Caco-2 (cell line): ENCODE measurements at regions of chr22 and their contacts with region 1.

Region 1: GRCh38 chr22:43385770-43386641 is 25.8 kb upstream of the MPPED1 start:
- DNase-seq: peak; percentile 67 to 79
- H3K4me3 ChIP-seq: no peak overlapping the region
- H3K4me3 Mint-ChIP-seq: no peak overlapping the region
- H3K27ac Mint-ChIP-seq: no peak overlapping the region
- H3K4me1 ChIP-seq: 0 out of 2 replicates have a peak, but pooled peaks cover 4% of the 10 kb centered on the region
- H3K4me1 Mint-ChIP-seq: no peaks in the 10 kb centered on the region
- H3K27me3 ChIP-seq: no peaks in the 10 kb centered on the region
- H3K27me3 Mint-ChIP-seq: peaks cover 22% of the 10 kb centered on the region
- CTCF ChIP-seq: peak; percentile 92 to 94

Region 2: GRCh38 chr22:43203471-43203981 is 182.5 kb before region 1 on chr22:
- CTCF ChIA-PET with region 1: no interaction called
- POLR2A ChIA-PET with region 1: no interaction called
- intact Hi-C with region 1: no loop called
- DNase-seq: no peak
- H3K4me3 ChIP-seq: no peak overlapping the region
- H3K4me3 Mint-ChIP-seq: no peak overlapping the region
- H3K27ac Mint-ChIP-seq: no peak overlapping the region
- H3K4me1 ChIP-seq: no peaks in the 10 kb centered on the region
- H3K4me1 Mint-ChIP-seq: no peaks in the 10 kb centered on the region
- H3K27me3 ChIP-seq: no peaks in the 10 kb centered on the region
- H3K27me3 Mint-ChIP-seq: no peaks in the 10 kb centered on the region
- CTCF ChIP-seq: no peak

Region 3: DNA sequence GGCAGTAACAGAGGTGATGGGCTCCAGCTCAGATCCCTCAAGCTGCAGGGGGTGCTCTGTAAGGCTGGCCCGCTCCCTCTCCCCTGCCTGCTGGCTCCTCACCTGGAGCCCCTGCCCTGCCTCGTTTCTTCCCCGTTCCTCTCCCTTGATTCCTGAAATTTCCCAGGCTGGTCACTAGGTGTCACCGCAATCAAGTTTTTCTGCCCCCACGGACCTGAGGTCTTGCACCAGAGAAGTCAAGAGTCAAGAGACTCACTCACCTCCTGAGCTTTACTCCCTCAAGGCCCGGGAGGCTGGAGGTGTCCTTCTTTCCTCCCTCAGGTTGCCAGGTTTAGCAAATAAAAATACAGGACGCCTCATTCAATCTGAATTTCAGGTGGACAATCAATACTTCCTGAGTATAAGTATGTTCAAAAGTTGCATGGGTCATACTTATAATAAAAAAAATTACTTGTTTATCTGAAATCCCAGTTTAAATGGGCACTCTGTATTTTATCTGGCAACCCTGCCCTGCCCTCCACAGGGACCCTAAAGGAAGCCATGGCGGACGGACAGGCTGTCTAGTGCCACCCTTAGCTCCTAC is 112.0 kb before region 1 on chr22:
- CTCF ChIA-PET with region 1: interaction called, 24 read pairs
- POLR2A ChIA-PET with region 1: no interaction called
- intact Hi-C with region 1: loop called (anchors 1 kb)
- DNase-seq: peak; percentile 67 to 77
- H3K4me3 ChIP-seq: no peak overlapping the region
- H3K4me3 Mint-ChIP-seq: no peak overlapping the region
- H3K27ac Mint-ChIP-seq: no peak overlapping the region
- H3K4me1 ChIP-seq: no peaks in the 10 kb centered on the region
- H3K4me1 Mint-ChIP-seq: no peaks in the 10 kb centered on the region
- H3K27me3 ChIP-seq: no peaks in the 10 kb centered on the region; the same call in 1 of the 2 replicates
- H3K27me3 Mint-ChIP-seq: peaks cover 4% of the 10 kb centered on the region
- CTCF ChIP-seq: peak; percentile 77 to 78

Region 4: DNA sequence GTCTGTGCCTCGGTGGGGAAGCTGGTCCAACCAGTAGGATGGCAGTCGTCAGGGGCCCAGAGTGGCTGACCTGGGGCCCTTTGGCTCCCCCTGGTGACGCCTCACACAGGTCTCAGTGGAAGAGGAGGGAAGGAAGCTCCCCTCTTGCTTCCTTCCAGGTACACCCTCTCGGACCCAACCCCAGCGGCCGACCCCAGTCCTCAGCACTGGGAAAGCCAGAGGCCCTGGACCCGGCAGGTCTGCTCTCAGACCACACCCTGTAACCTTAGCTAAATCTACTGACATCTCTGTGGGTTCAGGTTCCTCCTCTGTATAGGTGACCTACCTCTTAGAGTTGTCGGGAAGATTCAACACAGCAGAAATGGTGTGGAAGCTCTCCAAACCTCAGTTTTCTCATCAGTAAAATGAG is 39.5 kb before region 1 on chr22:
- CTCF ChIA-PET with region 1: interaction called, 5 read pairs
- POLR2A ChIA-PET with region 1: no interaction called
- intact Hi-C with region 1: loop called (anchors 2 kb)
- DNase-seq: peak; percentile 58 to 76
- H3K4me3 ChIP-seq: no peak overlapping the region
- H3K4me3 Mint-ChIP-seq: no peak overlapping the region
- H3K27ac Mint-ChIP-seq: no peak overlapping the region
- H3K4me1 ChIP-seq: no peaks in the 10 kb centered on the region
- H3K4me1 Mint-ChIP-seq: peaks cover 12% of the 10 kb centered on the region
- H3K27me3 ChIP-seq: peaks cover 3% of the 10 kb centered on the region; the same call in 1 of the 2 replicates
- H3K27me3 Mint-ChIP-seq: peaks cover 23% of the 10 kb centered on the region
- CTCF ChIP-seq: peak; percentile 73 to 79

Region 5: DNA sequence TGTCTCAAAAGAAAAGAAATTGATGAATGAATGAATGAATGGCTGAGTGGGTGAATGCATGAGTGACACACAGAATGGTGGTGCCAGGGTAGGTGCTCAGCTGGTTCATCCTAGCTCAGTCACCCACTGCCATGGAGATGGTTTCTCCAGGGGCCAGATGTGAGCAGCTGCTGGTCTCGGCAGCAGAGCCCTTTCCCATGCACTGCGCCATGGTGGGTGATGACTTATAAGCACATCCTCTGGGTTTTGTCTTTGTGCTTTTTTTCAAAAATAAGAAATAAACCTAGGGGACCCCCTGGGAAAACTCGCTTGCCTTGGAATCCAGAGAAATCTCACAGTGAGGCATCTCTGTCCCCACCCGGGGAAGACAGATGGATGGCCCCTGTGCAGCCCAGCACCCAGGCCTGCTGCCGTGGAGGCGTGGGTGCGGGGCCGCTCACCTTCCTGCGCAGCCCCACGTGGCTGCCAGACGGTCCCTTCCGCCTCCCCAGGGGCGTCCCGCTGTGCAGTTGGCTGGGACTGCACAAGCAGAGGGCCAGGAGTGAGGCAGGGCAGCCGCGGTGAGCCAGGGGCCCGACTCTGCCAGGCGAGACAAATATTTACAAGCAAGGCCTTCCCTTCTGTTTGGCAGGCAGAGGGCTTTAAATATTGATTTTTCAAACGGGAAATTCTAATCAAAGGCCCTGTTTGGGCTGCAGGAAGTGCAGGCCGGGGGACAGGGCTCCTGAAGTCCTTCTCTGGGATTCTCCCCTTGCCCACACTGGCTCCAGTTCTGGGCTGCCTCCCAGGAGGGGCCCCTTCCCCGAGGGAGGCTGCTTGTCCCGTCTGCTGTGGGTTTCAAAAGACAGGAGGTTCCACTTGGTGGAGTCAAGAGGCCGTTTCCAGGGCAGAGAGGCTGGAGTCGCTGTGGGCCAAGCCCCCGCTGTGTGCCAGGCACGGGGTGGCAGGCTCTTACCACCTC is 50.1 kb after region 1 on chr22:
- CTCF ChIA-PET with region 1: no interaction called
- POLR2A ChIA-PET with region 1: no interaction called
- intact Hi-C with region 1: no loop called
- DNase-seq: no peak
- H3K4me3 ChIP-seq: no peak overlapping the region
- H3K4me3 Mint-ChIP-seq: no peak overlapping the region
- H3K27ac Mint-ChIP-seq: no peak overlapping the region
- H3K4me1 ChIP-seq: no peaks in the 10 kb centered on the region
- H3K4me1 Mint-ChIP-seq: no peaks in the 10 kb centered on the region
- H3K27me3 ChIP-seq: no peaks in the 10 kb centered on the region; the same call in none of the 2 replicates
- H3K27me3 Mint-ChIP-seq: peaks cover 43% of the 10 kb centered on the region
- CTCF ChIP-seq: no peak

Region 6: GRCh38 chr22:43826142-43827002 is 440.4 kb after region 1 on chr22:
- CTCF ChIA-PET with region 1: interaction called, 5 read pairs
- POLR2A ChIA-PET with region 1: no interaction called
- intact Hi-C with region 1: loop called (anchors 10 kb)
- DNase-seq: no peak
- H3K4me3 ChIP-seq: no peak overlapping the region
- H3K4me3 Mint-ChIP-seq: no peak overlapping the region
- H3K27ac Mint-ChIP-seq: no peak overlapping the region
- H3K4me1 ChIP-seq: peaks cover 8% of the 10 kb centered on the region; the same call in 1 of the 2 replicates
- H3K4me1 Mint-ChIP-seq: no peaks in the 10 kb centered on the region
- H3K27me3 ChIP-seq: no peaks in the 10 kb centered on the region; the same call in 1 of the 2 replicates
- H3K27me3 Mint-ChIP-seq: peaks cover 30% of the 10 kb centered on the region
- CTCF ChIP-seq: peak; percentile 10 to 23